Posterior cingulate gyrus (tissue), 11 donors: ENCODE measurements at regions of chr20 and their contacts with region 1.

Region 1: GRCh38 chr20:208942-209566 is 18.0 kb upstream of the DEFB129 start:
- DNase-seq: no peak

Region 2: DNA sequence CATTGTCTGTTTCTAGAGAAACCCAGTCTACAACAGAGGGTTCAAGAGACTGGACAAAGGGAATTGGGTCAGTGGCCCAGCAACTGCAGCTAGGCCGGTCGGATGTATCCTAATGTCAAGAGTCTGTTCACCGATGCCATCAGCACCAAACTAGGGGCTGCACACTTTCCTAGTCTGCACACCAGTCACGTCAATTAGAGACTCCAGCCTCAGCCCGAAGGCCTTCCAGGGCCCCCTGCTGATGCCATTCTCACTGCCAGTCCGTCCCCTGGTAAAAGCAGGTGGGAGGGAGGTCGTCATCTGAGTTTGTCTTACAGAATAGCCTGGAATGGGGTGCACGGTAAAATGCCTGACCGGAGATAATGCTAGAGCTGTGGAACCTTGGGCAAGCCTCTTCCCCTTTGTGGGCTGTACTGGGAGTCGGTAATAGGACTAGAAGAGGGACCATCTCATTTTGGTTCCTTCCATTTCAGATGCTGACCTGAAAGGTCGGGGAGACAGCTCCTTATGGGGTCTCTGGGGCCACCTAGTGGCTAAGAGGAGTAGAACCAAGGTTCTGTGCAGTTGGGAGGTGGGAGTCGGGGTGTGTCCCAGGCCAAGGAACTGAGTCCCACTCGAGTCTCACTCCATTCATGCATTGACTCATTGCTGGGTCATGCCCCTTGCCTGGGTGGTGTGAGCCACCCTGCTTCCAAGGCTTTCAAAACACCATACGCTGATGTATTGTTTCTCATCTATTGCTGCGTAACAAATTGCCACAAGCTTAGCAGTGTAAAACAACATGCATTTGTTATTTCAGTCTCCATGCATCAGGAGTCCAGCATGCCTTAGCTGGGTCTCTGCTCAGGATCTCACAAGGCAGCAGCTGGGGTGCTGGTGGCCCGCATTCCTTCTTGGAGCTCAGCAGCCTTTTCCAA is 121.4 kb after region 1 on chr20:
- intact Hi-C with region 1: loop called (anchors 1 kb)
- DNase-seq: peak in 7 of 10 donors; percentile 26 to 93 (median 64)

Region 3: DNA sequence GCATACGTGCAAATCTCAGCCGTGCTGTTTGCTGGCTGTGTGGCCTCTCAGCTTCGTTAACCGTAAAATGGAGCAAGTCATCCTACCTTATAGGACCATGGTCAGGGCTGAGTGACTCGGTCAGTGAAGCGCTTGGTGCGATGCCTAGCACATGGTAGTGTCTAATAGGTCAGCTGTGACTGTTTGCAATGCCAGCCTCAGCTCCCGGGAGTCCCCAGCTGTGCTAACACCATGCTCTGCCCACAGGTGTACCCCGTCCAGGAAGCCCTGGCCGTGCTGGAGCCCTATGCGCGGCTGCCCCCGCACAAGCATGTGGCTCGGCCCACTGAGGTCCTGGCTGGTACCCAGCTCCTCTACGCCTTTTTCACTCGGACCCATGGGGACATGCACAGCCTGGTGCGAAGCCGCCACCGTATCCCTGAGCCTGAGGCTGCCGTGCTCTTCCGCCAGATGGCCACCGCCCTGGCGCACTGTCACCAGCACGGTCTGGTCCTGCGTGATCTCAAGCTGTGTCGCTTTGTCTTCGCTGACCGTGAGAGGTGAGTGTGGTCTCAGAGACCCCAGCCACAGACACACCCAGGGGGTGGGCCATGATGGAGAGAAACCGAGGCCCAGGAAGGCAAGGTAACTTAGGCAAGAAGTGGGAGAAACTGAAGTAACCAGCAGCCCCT is 182.1 kb after region 1 on chr20:
- intact Hi-C with region 1: no loop called
- DNase-seq: peak in 1 of 10 donors; percentile 82